ENCODE measurements at regions of chr3 and their contacts with region 1.

Region 1: GRCh38 chr3:102024270-102024904 is 175.1 kb downstream of the NFKBIZ start:
- H3K4me3 Mint-ChIP-seq: no peak overlapping the region
- H3K27ac Mint-ChIP-seq: no peak overlapping the region
- H3K4me1 Mint-ChIP-seq: peaks cover 35% of the 10 kb centered on the region
- H3K27me3 Mint-ChIP-seq: no peaks in the 10 kb centered on the region

Region 2: DNA sequence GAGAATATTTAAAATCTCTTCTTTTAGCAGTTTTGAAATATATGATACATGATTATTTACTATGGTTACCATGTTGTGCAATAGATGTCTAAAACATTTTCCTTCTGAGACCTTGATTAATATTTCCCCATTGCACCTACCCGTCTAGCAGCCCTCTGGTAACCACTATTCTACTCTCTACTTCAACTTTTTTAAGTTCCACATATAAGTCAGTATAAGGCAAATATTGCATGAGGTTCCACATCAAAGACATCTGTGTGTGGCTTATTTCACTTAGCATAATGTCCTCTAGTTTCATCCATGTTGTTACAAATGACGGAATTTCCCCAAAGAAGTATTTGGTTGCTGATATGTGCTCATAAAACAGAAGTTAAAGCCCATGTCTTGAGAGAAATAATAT is 204.6 kb before region 1 on chr3:
- intact Hi-C with region 1: loop called (anchors 5 kb)
- H3K4me3 Mint-ChIP-seq: no peak overlapping the region
- H3K27ac Mint-ChIP-seq: no peak overlapping the region
- H3K4me1 Mint-ChIP-seq: peaks cover 34% of the 10 kb centered on the region
- H3K27me3 Mint-ChIP-seq: no peaks in the 10 kb centered on the region

Region 3: DNA sequence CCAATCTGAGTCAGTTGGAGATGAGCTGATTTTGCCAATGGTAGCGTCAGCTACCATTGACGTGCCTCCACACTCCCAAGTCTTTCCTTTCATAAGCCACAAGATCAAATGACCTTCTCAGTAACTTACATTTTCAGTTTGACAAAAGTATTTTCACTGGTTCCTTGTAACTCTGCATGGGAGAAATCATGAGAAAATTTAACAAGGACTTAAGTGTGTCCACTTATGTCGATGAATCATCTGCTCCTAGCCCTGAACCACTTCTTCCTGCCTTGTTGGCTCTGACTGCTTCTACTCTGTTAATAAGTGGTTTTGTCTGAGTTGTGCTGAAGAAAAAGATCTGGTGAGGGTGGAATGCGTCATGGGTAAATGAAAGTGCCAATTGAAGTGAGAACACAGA is 73.9 kb before region 1 on chr3:
- intact Hi-C with region 1: no loop called
- H3K4me3 Mint-ChIP-seq: no peak overlapping the region
- H3K27ac Mint-ChIP-seq: no peak overlapping the region
- H3K4me1 Mint-ChIP-seq: peaks cover 6% of the 10 kb centered on the region
- H3K27me3 Mint-ChIP-seq: peaks cover 7% of the 10 kb centered on the region

Region 4: GRCh38 chr3:101988591-101988990 is 35.8 kb before region 1 on chr3:
- intact Hi-C with region 1: loop called (anchors 2 kb)
- H3K4me3 Mint-ChIP-seq: no peak overlapping the region
- H3K27ac Mint-ChIP-seq: peak overlapping the region; percentile 59
- H3K4me1 Mint-ChIP-seq: peaks cover 27% of the 10 kb centered on the region
- H3K27me3 Mint-ChIP-seq: peaks cover 2% of the 10 kb centered on the region

Region 5: DNA sequence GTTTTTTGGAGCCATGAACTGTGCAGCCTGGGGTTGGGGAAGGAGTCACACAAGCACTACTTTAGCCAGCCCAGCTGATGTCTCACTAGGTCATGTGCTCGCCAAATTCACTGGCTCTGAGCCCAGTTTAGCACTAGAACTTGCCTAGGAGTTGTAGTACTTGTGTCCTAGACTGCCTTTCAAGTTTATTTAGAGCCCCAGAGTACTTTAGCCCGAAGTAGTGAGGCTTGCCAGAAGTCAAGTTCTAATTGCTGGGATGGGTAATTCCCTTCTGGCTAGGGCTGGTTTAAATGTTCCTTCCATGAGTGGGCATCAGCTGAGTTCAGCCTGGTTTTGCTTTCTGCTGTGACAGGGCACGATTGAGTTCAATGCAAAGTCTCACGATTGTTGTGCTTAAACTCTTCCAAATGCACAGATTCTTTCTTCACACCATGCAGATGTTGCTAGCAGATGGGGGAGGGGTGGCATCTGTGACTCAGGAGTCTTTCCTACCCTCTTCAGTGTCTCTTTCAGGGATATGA is 182.2 kb after region 1 on chr3:
- intact Hi-C with region 1: loop called (anchors 10 kb)
- H3K4me3 Mint-ChIP-seq: no peak overlapping the region
- H3K27ac Mint-ChIP-seq: no peak overlapping the region
- H3K4me1 Mint-ChIP-seq: peaks cover 20% of the 10 kb centered on the region
- H3K27me3 Mint-ChIP-seq: no peaks in the 10 kb centered on the region

Region 6: DNA sequence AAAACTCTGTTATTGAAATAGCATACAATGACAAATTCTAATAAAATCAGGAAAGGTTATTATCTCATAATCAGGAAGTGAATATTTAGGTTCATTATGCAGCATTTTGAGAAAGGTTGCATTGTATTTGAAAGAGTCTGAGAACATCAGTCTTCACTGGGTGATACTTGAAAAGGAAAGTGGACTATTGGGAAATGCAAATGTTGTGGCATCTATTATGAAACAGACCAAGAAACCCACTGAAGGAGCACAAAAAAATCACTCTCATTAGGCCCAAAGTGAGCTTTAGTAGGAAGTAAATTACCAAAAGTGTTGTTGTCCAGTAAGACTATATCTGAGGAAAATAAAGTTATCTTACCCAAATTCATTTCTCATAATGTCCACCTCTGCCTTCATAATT is 501.2 kb after region 1 on chr3:
- intact Hi-C with region 1: no loop called
- H3K4me3 Mint-ChIP-seq: no peak overlapping the region
- H3K27ac Mint-ChIP-seq: no peak overlapping the region
- H3K4me1 Mint-ChIP-seq: peaks cover 9% of the 10 kb centered on the region
- H3K27me3 Mint-ChIP-seq: no peaks in the 10 kb centered on the region